ENCODE measurements at regions of chr12 and their contacts with region 1.

Region 1: DNA sequence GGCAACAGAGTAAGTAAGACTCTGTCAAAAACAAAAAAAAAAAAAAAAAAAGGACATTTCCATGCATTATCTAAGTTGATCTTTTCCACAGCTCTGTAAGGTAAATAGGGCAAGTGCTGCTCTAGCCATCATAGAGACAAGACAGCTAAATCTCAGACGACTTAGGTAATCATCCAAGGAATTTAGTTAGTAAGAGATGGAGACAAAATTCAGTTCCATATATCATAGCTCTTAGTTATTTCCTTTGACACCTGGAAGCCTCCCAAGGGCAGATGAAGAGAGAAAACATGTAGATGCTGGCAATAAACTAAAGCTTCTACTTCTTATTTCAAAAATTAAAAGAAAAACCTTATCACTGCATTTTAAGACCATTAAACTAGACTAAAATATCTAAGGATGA is 48.7 kb downstream of the ST8SIA1 start:
- DNase-seq: no peak
- H3K4me3 ChIP-seq: no peak overlapping the region
- H3K27me3 ChIP-seq: no peaks in the 10 kb centered on the region; the same call in 1 of the 2 replicates
- CTCF ChIP-seq: no peak

Region 2: DNA sequence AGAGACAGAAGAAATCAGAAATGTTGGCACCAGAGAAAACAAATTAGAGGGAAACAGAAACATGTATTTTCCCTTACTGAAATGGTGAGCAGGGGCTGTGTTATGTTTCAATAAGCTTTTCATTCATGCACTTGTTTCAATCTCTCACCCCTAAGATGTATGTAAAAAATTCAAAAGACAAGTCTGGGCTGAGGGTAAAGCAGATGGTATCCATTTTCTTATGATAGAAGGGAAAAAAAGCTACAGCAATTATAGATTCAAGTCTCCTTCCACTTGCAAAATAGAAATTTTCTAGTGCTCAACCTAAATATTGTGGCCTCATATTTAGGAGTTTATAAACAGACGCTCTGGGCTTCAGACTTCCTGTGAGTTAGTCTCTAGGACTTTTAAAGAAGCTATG is 89.6 kb before region 1 on chr12:
- CTCF ChIA-PET with region 1: no interaction called
- POLR2A ChIA-PET with region 1: interaction called, 20 read pairs
- DNase-seq: no peak
- H3K4me3 ChIP-seq: no peak overlapping the region
- H3K27me3 ChIP-seq: no peaks in the 10 kb centered on the region
- CTCF ChIP-seq: no peak

Region 3: DNA sequence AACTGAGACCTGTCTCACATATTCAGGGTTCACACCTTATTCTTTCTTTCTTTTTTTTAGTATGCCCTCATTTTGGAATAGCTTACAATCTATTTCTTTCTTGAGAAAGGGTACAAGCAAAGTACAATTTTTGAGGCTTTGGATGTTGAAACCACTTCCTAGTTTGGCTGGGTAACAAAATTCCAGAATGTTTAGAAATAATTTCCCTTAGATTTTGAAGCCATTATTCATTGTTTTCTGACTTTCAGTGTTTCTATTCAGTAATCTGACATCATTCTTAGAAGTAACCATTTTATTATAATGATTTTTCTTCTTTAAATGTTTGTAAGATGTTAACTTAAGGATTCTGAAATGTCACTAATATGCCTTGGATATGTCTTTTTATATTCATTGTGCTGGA is 20.5 kb after region 1 on chr12:
- CTCF ChIA-PET with region 1: no interaction called
- POLR2A ChIA-PET with region 1: no interaction called
- DNase-seq: no peak
- H3K4me3 ChIP-seq: no peak overlapping the region
- H3K27me3 ChIP-seq: no peaks in the 10 kb centered on the region
- CTCF ChIP-seq: no peak

Region 4: GRCh38 chr12:22828073-22828472 is 542.2 kb after region 1 on chr12:
- CTCF ChIA-PET with region 1: no interaction called
- POLR2A ChIA-PET with region 1: no interaction called
- DNase-seq: no peak
- H3K4me3 ChIP-seq: no peak overlapping the region
- H3K27me3 ChIP-seq: no peaks in the 10 kb centered on the region
- CTCF ChIP-seq: no peak

Measured in BJ (cell line).